ENCODE measurements at regions of chr9 and their contacts with region 1.

Region 1: GRCh38 chr9:118459913-118460312 is 755.7 kb downstream of the TLR4 start:
- DNase-seq: no peak
- H3K4me3 ChIP-seq: no peak overlapping the region
- H3K27ac ChIP-seq: no peak overlapping the region
- H3K4me1 ChIP-seq: no peaks in the 10 kb centered on the region
- H3K27me3 ChIP-seq: no peaks in the 10 kb centered on the region
- CTCF ChIP-seq: no peak

Region 2: GRCh38 chr9:118222375-118222774 is 237.5 kb before region 1 on chr9:
- CTCF ChIA-PET with region 1: no interaction called
- dilution Hi-C with region 1: no loop called
- in situ Hi-C with region 1: no loop called
- intact Hi-C with region 1: loop called (anchors 10 kb)
- DNase-seq: no peak
- H3K4me3 ChIP-seq: no peak overlapping the region
- H3K27ac ChIP-seq: no peak overlapping the region
- H3K4me1 ChIP-seq: no peaks in the 10 kb centered on the region
- H3K27me3 ChIP-seq: no peaks in the 10 kb centered on the region
- CTCF ChIP-seq: peak in 1 of 2 donors; percentile 55